ENCODE measurements at regions of chr4 and their contacts with region 1.

Region 1: DNA sequence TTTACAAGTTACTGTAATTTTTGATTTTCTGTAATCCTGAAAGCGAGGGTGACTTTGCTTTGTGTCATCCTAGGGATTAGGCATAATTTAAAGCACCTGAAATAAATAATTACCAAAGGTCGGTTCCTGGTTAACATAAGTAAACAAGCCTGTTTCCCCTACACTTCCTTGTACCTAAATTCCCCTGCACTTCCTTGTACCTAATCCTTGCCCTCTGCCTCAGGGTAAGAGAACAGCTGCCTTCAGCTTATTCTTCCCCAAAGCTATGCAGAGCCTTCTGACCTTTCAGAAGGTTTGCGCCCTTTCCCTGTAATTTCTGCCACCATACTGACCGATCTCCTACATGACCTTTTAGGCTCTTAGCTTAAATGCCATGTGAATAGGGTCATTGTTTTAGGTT is 166.1 kb upstream of the PDE5A start:
- DNase-seq: peak; percentile 2
- H3K4me3 Mint-ChIP-seq: no peak overlapping the region
- H3K27ac Mint-ChIP-seq: peak overlapping the region; percentile 78
- H3K4me1 Mint-ChIP-seq: peaks cover 70% of the 10 kb centered on the region
- H3K27me3 Mint-ChIP-seq: no peaks in the 10 kb centered on the region
- CTCF ChIP-seq: no peak

Region 2: DNA sequence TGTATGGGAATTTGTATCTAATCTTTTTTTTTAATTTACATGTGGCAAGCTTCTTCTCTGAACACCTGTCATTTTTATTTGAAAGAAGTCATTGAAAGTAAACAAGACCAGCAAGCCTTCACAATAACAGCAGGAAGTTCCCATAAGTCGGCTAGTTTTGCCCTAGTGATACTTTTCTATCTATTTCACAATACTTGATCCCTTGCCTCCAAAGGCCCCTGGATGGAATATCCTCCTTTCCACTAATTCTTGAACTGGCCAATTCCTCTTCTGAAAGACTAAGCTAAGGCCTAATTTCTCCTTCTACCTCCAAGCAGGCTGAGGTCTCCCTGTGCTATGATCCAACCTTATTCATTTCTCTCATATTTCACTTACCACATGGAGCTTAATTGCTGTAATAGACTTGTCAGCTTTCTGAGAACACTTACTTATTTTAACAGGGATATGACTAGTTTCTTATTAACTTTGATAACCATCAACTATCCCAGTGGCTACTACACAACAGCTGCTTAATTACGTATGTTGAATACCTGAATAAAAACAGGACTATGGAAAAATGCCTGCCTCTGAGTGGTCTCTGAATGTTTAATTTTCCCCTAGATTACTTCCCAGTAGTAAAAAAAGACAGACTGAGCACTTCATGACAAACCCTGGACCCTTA is 77.8 kb after region 1 on chr4:
- CTCF ChIA-PET with region 1: no interaction called
- intact Hi-C with region 1: loop called (anchors 5 kb)
- DNase-seq: peak; percentile 3
- H3K4me3 Mint-ChIP-seq: peak overlapping the region; percentile 22
- H3K27ac Mint-ChIP-seq: peak overlapping the region; percentile 92
- H3K4me1 Mint-ChIP-seq: peaks cover 23% of the 10 kb centered on the region
- H3K27me3 Mint-ChIP-seq: no peaks in the 10 kb centered on the region
- CTCF ChIP-seq: no peak

Measured in Calu3 (cell line).